Heart left ventricle (tissue), 16 donors: ENCODE measurements at regions of chr19 and their contacts with region 1.

Region 1: GRCh38 chr19:19404879-19405860 is at the start of gene GATAD2A:
- DNase-seq: peak; percentile 95 to 98 (median 95)
- ATAC-seq: peak; percentile 90 to 96 (median 95)
- H3K4me3 ChIP-seq: peak within 1 kb of the TSS; percentile 66 to 100 (median 94)
- H3K27ac ChIP-seq: peak within 1 kb of the TSS; percentile 63 to 95 (median 90)
- H3K4me1 ChIP-seq: peaks cover 4 to 68% (median 37%) of the 10 kb centered on the region in 12 donors
- H3K27me3 ChIP-seq: no peaks in the 10 kb centered on the region
- CTCF ChIP-seq: peak in 11 of 12 donors; percentile 6 to 72 (median 52)
- POLR2A ChIP-seq: peak in 1 of 2 donors; percentile 62
- total RNA-seq, gene GATAD2A: 18.1 to 49.5 (median 35.5) TPM

Region 2: DNA sequence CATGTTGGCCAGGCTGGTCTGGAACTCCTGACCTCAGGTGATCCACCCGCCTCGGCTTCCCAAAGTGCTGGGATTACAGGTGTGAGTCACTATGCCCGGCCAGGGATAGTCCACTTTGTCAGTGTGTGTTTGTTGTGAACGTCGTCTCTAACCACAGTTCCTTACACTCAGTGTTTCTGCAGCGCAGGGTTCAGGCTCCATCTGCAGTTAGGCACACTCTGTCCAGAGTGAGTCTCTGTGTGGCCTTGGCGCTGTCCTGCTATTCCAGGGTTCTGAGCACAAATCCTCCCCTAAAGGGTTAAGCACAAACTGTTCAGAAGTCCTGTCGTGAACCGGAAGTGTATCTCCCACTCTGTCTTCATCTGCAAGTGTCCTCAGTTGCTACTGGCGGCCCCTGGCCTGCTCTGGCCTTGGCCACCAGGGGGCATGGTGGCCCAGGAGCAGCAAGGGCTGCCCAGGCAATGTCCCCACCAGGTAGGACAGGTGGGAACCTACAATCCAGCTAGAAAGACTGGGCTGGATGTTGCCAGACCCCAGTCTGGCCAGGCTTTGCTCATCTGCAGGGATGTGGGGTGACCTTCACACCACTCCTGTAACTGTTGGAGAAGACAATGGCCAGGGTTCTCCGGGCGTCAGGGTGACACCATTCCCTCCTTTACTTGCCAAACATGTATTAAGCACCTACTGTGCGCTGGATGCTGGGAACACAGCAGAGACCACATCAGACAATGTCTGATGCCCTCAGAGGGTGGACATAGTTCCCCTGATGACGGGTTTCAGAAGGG is 38.4 kb before region 1 on chr19:
- intact Hi-C with region 1: loop called in 6 of 10 experiments (anchors 2 to 5 kb)
- DNase-seq: peak; percentile 58 to 86 (median 67)
- ATAC-seq: peak; percentile 75 to 90 (median 82)
- H3K4me3 ChIP-seq: no peak overlapping the region
- H3K27ac ChIP-seq: peak overlapping the region in 1 of 12 donors; percentile 27
- H3K4me1 ChIP-seq: peaks cover 0 to 21% (median 10%) of the 10 kb centered on the region in 12 donors
- H3K27me3 ChIP-seq: no peaks in the 10 kb centered on the region
- CTCF ChIP-seq: peak; percentile 90 to 97 (median 94)
- POLR2A ChIP-seq: no peak

Region 3: GRCh38 chr19:19385108-19385899 is 19.9 kb before region 1 on chr19:
- intact Hi-C with region 1: loop called in 1 of 10 experiments (anchors 1 kb)
- DNase-seq: peak; percentile 100
- ATAC-seq: peak; percentile 98 to 99 (median 99)
- H3K4me3 ChIP-seq: peak overlapping the region; percentile 36 to 97 (median 88)
- H3K27ac ChIP-seq: peak overlapping the region; percentile 14 to 90 (median 85)
- H3K4me1 ChIP-seq: peaks cover 7 to 66% (median 41%) of the 10 kb centered on the region in 12 donors
- H3K27me3 ChIP-seq: no peaks in the 10 kb centered on the region
- CTCF ChIP-seq: peak in 8 of 12 donors; percentile 6 to 49 (median 28)
- POLR2A ChIP-seq: peak in 1 of 2 donors; percentile 80

Region 4: DNA sequence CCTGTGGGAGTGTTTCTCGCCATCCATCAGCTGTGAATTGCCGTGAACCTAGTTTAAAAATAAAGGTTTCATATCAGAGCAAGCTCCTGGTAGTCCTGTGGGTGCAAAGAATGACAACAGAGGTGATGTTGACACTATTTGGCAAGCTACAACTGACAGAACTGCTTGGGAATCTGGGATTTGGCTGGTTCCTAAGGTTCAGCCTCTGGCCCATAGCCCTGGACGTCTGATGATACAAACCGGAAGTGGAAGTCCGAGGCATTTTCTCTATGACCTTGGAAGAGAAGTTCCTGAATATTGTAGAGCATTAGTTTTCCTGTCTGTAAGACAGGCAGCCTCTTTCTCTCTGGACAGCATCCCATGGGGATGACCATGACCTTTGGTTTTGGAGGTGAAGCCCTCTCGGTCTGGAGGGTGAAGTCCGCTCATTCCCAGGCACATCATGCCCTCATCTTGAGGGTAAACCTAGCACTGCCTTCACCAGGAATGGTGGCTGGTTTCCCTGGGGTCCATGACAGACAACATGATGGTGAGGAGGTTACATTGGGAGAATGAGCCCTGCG is 29.4 kb after region 1 on chr19:
- intact Hi-C with region 1: loop called in 1 of 10 experiments (anchors 1 kb)
- DNase-seq: peak; percentile 12 to 74 (median 59)
- ATAC-seq: peak; percentile 73 to 90 (median 88)
- H3K4me3 ChIP-seq: no peak overlapping the region
- H3K27ac ChIP-seq: peak overlapping the region in 11 of 12 donors; percentile 56 to 93 (median 76)
- H3K4me1 ChIP-seq: peaks cover 8 to 83% (median 55%) of the 10 kb centered on the region in 12 donors
- H3K27me3 ChIP-seq: no peaks in the 10 kb centered on the region
- CTCF ChIP-seq: no peak
- POLR2A ChIP-seq: no peak

Region 5: DNA sequence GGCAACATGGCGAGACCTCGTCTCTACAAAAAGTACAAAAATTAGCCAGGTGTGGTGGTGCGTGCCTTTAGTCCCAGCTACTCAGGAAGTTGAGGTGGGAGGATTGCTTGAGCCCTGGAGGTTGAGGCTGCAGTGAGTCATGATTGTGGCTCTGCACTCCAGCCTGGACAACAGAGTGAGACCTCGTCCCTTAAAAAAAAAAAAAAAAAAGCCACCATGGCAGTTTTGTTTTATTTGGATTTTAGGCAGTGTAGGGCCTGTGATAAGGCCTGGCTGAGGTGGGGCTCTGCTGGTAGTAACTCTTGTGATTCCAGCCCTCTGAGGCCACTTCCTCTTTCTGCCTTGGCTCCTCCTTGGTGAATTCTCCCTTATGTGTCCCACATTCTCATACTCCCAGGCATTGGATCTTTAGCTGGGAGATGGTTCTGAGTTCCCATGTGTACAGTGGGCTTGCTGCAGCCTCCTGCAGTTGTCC is 39.5 kb after region 1 on chr19:
- intact Hi-C with region 1: loop called in 1 of 10 experiments (anchors 5 kb)
- DNase-seq: peak in 1 of 5 donors; percentile 30
- ATAC-seq: peak in 3 of 4 donors; percentile 41 to 49 (median 44)
- H3K4me3 ChIP-seq: no peak overlapping the region
- H3K27ac ChIP-seq: peak overlapping the region in 1 of 12 donors; percentile 74
- H3K4me1 ChIP-seq: peaks cover 0 to 58% (median 34%) of the 10 kb centered on the region in 12 donors
- H3K27me3 ChIP-seq: no peaks in the 10 kb centered on the region
- CTCF ChIP-seq: no peak
- POLR2A ChIP-seq: no peak

Region 6: GRCh38 chr19:19459707-19460251 is 54.6 kb after region 1 on chr19:
- intact Hi-C with region 1: loop called in 3 of 10 experiments (anchors 5 to 10 kb)
- DNase-seq: peak in 4 of 5 donors; percentile 57 to 64 (median 60)
- ATAC-seq: peak in 2 of 4 donors; percentile 35 to 51
- H3K4me3 ChIP-seq: peak overlapping the region in 4 of 12 donors; percentile 7 to 39 (median 22)
- H3K27ac ChIP-seq: peak overlapping the region in 11 of 12 donors; percentile 39 to 94 (median 69)
- H3K4me1 ChIP-seq: peaks cover 23 to 87% (median 67%) of the 10 kb centered on the region in 12 donors
- H3K27me3 ChIP-seq: no peaks in the 10 kb centered on the region
- CTCF ChIP-seq: no peak
- POLR2A ChIP-seq: no peak

Region 7: DNA sequence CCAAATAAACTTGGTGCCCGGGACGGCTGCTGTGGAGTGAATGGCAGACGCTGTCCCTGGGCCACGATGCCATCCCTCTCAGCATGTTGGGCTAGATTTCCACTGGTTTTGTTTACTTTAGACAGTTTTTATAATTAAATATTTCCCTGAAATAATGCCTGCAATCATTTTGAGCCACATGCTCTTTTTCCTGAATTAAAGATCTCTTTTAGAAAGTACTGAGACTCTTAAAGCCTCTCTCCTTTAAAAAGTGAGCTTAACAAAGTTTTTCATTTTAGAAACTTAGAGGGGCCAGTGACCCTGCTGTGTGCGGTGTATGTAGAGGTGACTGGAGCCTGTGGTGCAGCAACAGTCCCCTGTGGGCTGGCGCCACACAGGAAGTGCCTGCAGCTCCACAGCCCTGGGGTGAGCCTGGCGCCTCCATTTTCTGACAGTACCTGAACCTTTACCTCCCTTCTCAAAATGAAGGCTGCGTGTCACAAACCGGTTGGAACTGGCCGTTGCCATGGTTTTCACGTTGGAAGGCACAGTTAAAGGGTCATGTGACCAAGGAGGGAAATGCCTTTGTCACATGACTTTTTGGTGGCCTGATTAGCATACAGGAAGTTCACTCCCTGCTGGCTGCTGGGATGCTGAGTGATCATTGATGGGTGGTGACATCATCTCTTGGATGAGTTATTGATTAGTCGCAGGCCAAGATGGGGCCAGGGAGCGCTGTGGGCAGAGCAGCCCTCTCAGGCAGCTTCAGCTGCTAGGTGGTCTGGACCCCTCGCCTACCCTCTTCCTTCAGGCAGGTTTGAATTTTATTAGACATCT is 83.9 kb after region 1 on chr19:
- intact Hi-C with region 1: loop called in 6 of 10 experiments (anchors 1 to 5 kb)
- DNase-seq: peak; percentile 77 to 84 (median 79)
- ATAC-seq: peak; percentile 10 to 68 (median 56)
- H3K4me3 ChIP-seq: peak overlapping the region in 8 of 12 donors; percentile 1 to 40 (median 25)
- H3K27ac ChIP-seq: peak overlapping the region; percentile 38 to 94 (median 70)
- H3K4me1 ChIP-seq: peaks cover 10 to 60% (median 45%) of the 10 kb centered on the region in 12 donors
- H3K27me3 ChIP-seq: no peaks in the 10 kb centered on the region
- CTCF ChIP-seq: no peak
- POLR2A ChIP-seq: no peak